ENCODE measurements at regions of chr2 and their contacts with region 1.

Region 1: DNA sequence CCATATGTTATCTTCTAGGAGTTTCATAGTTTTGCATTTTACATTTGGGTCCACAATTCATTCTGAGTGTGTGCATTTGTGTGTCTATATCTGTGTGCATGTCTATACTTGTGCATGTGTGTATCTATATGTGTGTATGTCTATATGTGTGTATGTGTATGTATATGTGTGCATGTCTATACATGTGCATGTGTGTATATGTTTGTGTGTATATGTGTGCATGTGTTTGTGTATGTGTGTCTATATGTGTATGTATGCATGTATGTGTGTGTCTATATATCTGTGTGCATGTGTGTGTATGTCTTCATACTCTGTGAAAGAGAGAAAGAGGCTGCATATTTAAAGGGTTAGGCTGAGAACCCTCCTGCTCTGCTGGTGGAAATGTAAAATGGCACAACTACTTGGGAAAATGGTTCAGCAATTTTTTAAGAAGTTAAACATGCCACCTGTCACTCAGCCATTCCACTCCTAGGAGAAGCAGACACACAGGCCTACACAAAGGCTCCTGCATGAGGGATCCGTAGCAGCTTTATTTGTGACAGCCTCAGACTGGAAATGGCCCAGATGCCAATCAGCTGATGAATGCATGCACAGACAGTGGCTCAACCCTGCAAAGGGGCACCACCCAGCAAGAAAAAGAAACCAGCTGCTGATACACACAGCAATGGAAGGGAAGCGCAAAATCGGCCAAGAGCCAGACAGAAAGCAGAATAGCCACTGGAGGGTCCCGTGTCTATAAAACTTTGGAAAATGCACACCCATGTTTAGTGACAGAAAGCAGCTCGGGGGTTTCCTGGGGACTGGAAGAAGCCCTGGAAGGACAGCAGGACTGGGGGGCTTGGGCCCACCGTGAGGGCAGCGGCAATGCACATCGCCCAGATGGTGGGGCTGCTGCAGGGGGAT is 146.8 kb downstream of the SEPTIN10 start:
- DNase-seq: peak; percentile 42
- H3K4me3 ChIP-seq: no peak overlapping the region
- H3K27ac ChIP-seq: no peak overlapping the region
- H3K4me1 ChIP-seq: peaks cover 15% of the 10 kb centered on the region
- H3K27me3 ChIP-seq: no peaks in the 10 kb centered on the region
- CTCF ChIP-seq: no peak
- POLR2A ChIP-seq: no peak

Region 2: DNA sequence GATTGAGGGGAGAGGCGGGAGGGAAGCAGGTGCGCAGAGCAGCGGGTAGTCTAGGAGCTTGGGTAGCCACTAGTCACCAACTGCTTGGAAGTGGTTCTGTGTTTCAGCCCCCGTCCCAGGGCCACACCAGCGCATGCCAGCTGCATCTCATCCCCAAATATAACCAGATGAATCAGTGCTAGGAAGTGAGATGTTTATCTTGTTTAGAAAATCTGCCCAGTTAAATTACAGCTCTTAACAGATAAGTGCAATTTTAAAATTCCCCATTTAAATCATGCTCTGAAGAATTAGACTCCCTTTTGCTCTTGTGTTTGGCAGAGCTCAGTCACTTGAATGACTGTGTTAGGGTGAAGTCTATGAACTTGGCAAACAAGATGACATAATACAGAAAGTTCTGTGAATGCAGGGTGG is 47.0 kb before region 1 on chr2:
- CTCF ChIA-PET with region 1: no interaction called
- POLR2A ChIA-PET with region 1: no interaction called
- dilution Hi-C with region 1: no loop called
- intact Hi-C with region 1: loop called (anchors 2 kb)
- DNase-seq: peak; percentile 43
- H3K4me3 ChIP-seq: no peak overlapping the region
- H3K27ac ChIP-seq: no peak overlapping the region
- H3K4me1 ChIP-seq: peaks cover 3% of the 10 kb centered on the region
- H3K27me3 ChIP-seq: no peaks in the 10 kb centered on the region
- CTCF ChIP-seq: no peak
- POLR2A ChIP-seq: no peak

Region 3: GRCh38 chr2:109448946-109449788 is 17.8 kb before region 1 on chr2:
- CTCF ChIA-PET with region 1: no interaction called
- POLR2A ChIA-PET with region 1: no interaction called
- dilution Hi-C with region 1: no loop called
- intact Hi-C with region 1: no loop called
- DNase-seq: no peak
- H3K4me3 ChIP-seq: no peak overlapping the region
- H3K27ac ChIP-seq: no peak overlapping the region
- H3K4me1 ChIP-seq: no peaks in the 10 kb centered on the region
- H3K27me3 ChIP-seq: no peaks in the 10 kb centered on the region
- CTCF ChIP-seq: no peak
- POLR2A ChIP-seq: no peak

Region 4: GRCh38 chr2:110157153-110157793 is 690.3 kb after region 1 on chr2:
- CTCF ChIA-PET with region 1: no interaction called
- POLR2A ChIA-PET with region 1: no interaction called
- dilution Hi-C with region 1: no loop called
- intact Hi-C with region 1: no loop called
- DNase-seq: peak; percentile 78
- H3K4me3 ChIP-seq: no peak overlapping the region
- H3K27ac ChIP-seq: peak overlapping the region; percentile 82
- H3K4me1 ChIP-seq: peaks cover 29% of the 10 kb centered on the region
- H3K27me3 ChIP-seq: no peaks in the 10 kb centered on the region
- CTCF ChIP-seq: peak; percentile 68 to 74
- POLR2A ChIP-seq: no peak

Measured in endothelial cell of umbilical vein (primary cell).